Activated naive CD4-positive, alpha-beta T cell treated with anti-CD3 and anti-CD28 coated beads for 36 hours (primary cell): ENCODE measurements at regions of chr11 and their contacts with region 1.

Region 1: GRCh38 chr11:96235751-96236150 is 107.2 kb downstream of the MAML2 start:
- DNase-seq: peak; percentile 89
- H3K4me3 Mint-ChIP-seq: peak overlapping the region; percentile 38
- H3K27ac Mint-ChIP-seq: peak overlapping the region; percentile 90
- H3K4me1 Mint-ChIP-seq: peaks cover 24% of the 10 kb centered on the region
- H3K27me3 Mint-ChIP-seq: no peaks in the 10 kb centered on the region

Region 2: DNA sequence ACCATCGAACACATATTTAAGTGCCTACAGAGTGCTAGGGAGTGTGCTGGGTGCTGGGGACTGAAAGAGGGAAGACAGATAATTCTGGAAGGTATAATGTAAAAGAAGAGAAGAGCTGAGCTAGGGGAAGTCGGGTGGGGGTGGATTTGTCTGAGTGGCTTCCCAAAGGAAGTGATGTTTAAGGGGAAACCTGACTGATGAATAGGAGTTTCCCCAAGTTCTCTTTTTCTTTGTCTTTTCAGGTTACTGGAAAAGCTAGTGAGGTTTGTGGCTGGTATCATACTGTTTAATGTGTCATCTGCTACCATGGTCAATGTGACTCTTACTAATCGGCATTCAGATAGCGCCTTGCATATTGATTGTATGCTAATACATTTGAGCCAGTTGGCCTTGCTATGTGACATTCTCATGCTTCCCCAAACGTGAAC is 160.2 kb before region 1 on chr11:
- CTCF ChIA-PET with region 1: interaction called, 5 read pairs
- intact Hi-C with region 1: loop called (anchors 1 kb)
- DNase-seq: peak; percentile 63
- H3K4me3 Mint-ChIP-seq: peak overlapping the region; percentile 2
- H3K27ac Mint-ChIP-seq: peak overlapping the region; percentile 93
- H3K4me1 Mint-ChIP-seq: peaks cover 85% of the 10 kb centered on the region
- H3K27me3 Mint-ChIP-seq: no peaks in the 10 kb centered on the region

Region 3: GRCh38 chr11:96188243-96189006 is 47.3 kb before region 1 on chr11:
- CTCF ChIA-PET with region 1: no interaction called
- intact Hi-C with region 1: loop called (anchors 1 kb)
- DNase-seq: peak; percentile 49
- H3K4me3 Mint-ChIP-seq: peak overlapping the region; percentile 38
- H3K27ac Mint-ChIP-seq: peak overlapping the region; percentile 92
- H3K4me1 Mint-ChIP-seq: peaks cover 90% of the 10 kb centered on the region
- H3K27me3 Mint-ChIP-seq: no peaks in the 10 kb centered on the region

Region 4: DNA sequence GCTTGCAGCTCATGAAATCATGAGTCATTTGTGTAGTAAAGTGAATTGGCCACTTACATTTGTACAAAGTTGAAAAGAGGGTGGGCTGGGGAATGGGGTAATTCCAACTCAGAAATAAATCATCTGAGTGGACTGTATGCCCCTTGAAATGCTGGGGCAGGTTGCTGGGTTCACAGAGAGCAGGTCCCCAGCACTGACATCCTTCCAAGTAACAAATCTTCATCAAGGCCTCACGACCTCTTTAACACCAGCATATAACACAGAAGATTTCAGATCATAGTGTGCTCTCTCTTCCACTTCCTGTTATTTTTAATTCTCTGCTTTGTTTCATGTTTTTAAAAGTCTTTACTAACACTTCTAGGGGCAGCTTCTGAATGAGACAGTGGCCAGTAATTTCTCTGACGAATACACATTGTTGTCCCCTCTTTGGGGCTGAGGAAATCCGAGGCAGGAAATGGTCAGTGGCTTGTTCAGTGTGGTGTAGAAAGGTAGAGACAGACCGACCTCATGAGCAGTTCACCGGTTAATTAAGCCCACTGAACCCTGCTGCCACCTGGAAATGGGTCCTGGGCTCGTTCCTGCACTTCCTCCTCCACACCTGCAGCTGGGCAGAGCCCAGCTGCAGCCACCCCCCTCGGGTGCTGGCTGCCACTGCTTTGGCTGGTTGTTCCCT is 20.5 kb before region 1 on chr11:
- CTCF ChIA-PET with region 1: no interaction called
- intact Hi-C with region 1: loop called (anchors 1 kb)
- DNase-seq: peak; percentile 51
- H3K4me3 Mint-ChIP-seq: peak overlapping the region; percentile 49
- H3K27ac Mint-ChIP-seq: peak overlapping the region; percentile 94
- H3K4me1 Mint-ChIP-seq: peaks cover 79% of the 10 kb centered on the region
- H3K27me3 Mint-ChIP-seq: no peaks in the 10 kb centered on the region

Region 5: GRCh38 chr11:96293598-96294021 is 57.9 kb after region 1 on chr11:
- CTCF ChIA-PET with region 1: no interaction called
- intact Hi-C with region 1: loop called (anchors 2 kb)
- DNase-seq: no peak
- H3K4me3 Mint-ChIP-seq: peak overlapping the region; percentile 1
- H3K27ac Mint-ChIP-seq: no peak overlapping the region
- H3K4me1 Mint-ChIP-seq: peaks cover 78% of the 10 kb centered on the region
- H3K27me3 Mint-ChIP-seq: no peaks in the 10 kb centered on the region

Region 6: DNA sequence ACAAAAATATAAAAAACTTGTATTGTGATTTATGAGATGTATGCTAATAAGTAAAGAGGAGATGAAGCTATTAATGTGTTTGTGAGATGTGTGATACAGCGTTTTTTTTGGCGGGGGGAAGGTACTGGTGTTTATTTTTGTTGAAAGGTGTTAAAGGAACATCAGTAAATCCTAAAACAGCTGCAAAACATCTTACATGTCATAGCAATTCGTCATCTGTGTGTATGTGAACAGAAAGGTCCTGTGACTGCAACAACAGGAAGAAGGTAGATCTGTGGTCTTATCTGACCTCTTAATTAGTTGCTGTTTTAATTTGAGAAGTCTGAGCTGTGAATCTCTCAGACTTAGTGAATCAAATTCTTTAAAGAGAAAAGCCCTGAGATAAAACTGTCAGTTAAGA is 1195.1 kb after region 1 on chr11:
- CTCF ChIA-PET with region 1: no interaction called
- intact Hi-C with region 1: no loop called
- DNase-seq: no peak
- H3K4me3 Mint-ChIP-seq: no peak overlapping the region
- H3K27ac Mint-ChIP-seq: no peak overlapping the region
- H3K4me1 Mint-ChIP-seq: no peaks in the 10 kb centered on the region
- H3K27me3 Mint-ChIP-seq: no peaks in the 10 kb centered on the region